ENCODE measurements at regions of chr2 and their contacts with region 1.

Region 1: DNA sequence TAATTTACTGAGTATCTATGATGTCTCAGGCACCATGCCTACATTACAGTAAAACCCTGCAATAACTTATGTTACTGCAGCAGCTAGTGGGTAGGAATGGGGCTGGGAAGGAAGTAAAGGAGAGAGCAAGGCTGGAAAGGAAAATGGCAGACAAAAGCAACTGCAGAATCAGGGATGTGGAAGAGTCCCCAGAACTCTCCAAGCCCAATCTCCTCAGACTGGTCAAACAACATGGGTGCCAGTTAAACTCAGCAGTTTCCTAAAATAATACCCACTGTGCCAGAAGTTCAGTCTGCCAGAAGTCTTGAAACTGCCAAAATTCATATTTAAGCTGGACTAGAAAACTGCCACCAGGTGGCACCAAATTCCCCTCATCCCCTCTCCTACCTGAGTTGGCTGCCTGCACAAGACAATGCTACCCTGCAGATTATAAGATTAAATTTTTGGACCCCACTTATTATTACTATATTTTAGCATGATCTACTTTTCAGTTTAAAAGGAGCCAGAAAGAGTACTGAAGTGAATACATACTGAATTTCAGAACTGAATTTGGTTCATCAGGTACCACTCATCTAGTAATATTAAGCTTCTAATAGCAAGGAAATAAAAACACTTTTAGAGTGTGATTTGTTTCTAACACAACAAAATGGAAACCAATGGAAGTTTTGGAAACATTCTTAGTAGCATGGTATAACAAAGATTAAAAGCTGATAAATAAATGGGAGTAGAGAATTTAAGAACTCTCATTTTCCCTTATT is 86.8 kb upstream of the DNER start:
- DNase-seq: peak; percentile 33 to 69
- H3K4me3 ChIP-seq: no peak overlapping the region
- H3K27ac ChIP-seq: peak overlapping the region; percentile 63; the same call in 1 of the 2 replicates
- H3K4me1 ChIP-seq: no peaks in the 10 kb centered on the region
- H3K27me3 ChIP-seq: no peaks in the 10 kb centered on the region
- CTCF ChIP-seq: peak; percentile 52 to 60 (median 59)
- EP300 ChIP-seq: no peak
- POLR2A ChIP-seq: no peak
- RAD21 ChIP-seq: peak; percentile 59 to 69

Region 2: DNA sequence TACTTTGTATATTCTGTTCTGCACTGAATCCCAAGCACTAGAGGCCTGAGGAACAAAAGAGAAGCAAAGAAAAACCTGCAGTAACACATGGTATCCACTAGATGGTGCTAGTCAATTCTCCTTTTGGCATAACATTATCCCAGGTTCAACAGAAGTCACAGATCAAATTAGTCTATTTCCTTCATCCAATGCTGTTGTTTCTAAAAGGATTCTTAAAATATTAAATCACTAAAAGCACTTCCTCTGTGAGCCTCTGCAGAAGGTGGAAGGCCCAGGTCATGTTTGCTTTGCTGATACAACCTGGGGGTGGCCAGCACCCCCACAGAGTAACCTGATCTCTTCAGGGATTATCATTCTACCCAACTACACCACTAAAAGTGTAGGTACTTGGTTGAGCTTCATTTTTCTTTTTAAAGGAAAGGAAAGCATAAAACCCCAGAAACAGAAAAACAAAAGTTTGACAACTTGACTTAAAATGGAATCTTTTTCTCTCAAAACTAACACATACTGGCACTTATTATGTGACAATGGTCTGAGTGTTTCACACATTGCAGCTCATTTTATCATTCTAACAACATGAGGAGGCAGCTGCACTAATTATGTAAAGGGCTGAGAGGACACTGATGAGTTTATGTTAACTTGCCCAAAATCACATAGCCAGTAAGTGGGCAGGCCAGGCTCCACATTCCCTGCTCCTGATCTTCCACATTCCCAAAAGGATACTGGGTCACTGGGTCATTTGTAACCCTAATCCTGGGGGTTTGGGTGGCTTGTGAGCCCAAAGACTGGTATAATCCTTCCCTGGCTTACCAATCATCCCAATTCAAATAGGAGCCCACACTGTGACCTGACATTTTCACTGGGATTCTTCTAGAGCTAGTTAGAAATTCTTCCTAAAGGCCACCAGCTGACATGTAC is 20.1 kb before region 1 on chr2:
- CTCF ChIA-PET with region 1: interaction called, 24 read pairs
- POLR2A ChIA-PET with region 1: no interaction called
- DNase-seq: peak in 1 of 2 experiments; percentile 50
- H3K4me3 ChIP-seq: no peak overlapping the region
- H3K27ac ChIP-seq: no peak overlapping the region
- H3K4me1 ChIP-seq: peaks cover 0 to 18% (median 9%) of the 10 kb centered on the region in 4 experiments; a peak in 6 of 7 replicates
- H3K27me3 ChIP-seq: no peaks in the 10 kb centered on the region
- CTCF ChIP-seq: peak in 2 of 3 experiments; percentile 39 to 85; a peak in 2 of 4 replicates
- EP300 ChIP-seq: no peak
- POLR2A ChIP-seq: no peak
- RAD21 ChIP-seq: peak; percentile 50

Region 3: GRCh38 chr2:229815858-229816257 is 14.7 kb after region 1 on chr2:
- CTCF ChIA-PET with region 1: interaction called, 12 read pairs
- POLR2A ChIA-PET with region 1: no interaction called
- DNase-seq: no peak
- H3K4me3 ChIP-seq: no peak overlapping the region
- H3K27ac ChIP-seq: no peak overlapping the region
- H3K4me1 ChIP-seq: no peaks in the 10 kb centered on the region
- H3K27me3 ChIP-seq: peaks cover 0 to 1% (median 0%) of the 10 kb centered on the region in 4 experiments; a peak in 1 of 7 replicates
- CTCF ChIP-seq: no peak
- EP300 ChIP-seq: no peak
- POLR2A ChIP-seq: no peak
- RAD21 ChIP-seq: no peak

Region 4: DNA sequence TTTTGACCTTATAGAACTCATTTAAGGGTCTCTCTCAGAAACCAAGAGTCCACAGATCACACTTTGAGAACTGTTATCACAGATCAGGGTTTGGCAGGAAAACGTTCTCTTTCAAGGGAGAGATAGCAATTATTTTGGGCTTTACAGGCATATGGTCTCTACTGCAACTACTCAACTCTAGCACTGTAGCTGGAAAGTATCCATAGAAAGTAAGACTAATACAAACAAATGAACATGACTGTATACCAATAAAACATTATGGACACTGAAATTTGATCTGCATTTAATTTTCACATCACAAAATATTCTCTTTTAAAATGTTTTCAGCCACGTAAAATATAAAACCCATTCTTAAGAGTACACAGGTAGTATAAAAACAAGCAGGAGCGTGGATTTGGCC is 20.1 kb after region 1 on chr2:
- CTCF ChIA-PET with region 1: interaction called, 12 read pairs
- POLR2A ChIA-PET with region 1: no interaction called
- DNase-seq: no peak
- H3K4me3 ChIP-seq: no peak overlapping the region
- H3K27ac ChIP-seq: no peak overlapping the region
- H3K4me1 ChIP-seq: no peaks in the 10 kb centered on the region
- H3K27me3 ChIP-seq: no peaks in the 10 kb centered on the region
- CTCF ChIP-seq: no peak
- EP300 ChIP-seq: no peak
- POLR2A ChIP-seq: no peak
- RAD21 ChIP-seq: no peak

Region 5: DNA sequence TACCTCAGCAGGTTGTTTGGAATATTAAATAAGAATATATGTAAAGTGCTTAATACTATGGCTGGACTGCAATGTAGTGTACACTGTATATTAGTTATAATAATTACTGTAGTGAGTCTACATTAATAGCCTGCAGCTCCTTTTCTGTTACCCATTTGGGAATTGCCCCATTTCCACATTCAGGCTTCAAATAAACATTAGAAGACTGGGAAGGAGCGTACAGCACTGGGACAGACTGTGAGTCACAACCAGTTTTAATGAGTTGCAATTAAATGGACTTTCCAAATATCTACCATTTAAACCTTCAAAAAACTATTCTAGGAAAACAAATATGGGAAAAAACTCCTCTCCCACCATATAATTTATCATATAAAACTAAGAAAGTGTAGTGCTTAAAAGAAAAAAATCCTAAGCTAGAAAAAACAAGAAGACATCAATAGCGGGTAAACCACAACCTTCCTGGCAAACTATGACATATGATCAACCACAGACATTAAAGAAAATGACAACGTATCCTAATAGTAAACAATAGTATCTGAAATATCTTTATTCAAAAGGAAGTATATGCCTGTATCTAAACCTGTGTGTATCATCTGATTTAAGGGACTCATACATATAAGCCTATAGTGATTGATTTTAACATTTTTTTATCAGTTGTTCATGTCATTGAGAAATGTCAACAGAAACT is 34.6 kb after region 1 on chr2:
- CTCF ChIA-PET with region 1: interaction called, 15 read pairs
- POLR2A ChIA-PET with region 1: no interaction called
- DNase-seq: no peak
- H3K4me3 ChIP-seq: no peak overlapping the region
- H3K27ac ChIP-seq: no peak overlapping the region
- H3K4me1 ChIP-seq: no peaks in the 10 kb centered on the region
- H3K27me3 ChIP-seq: no peaks in the 10 kb centered on the region
- CTCF ChIP-seq: no peak
- EP300 ChIP-seq: no peak
- POLR2A ChIP-seq: no peak
- RAD21 ChIP-seq: no peak

Measured in H1 (cell line).